ENCODE measurements at regions of chr14 and their contacts with region 1.

Region 1: DNA sequence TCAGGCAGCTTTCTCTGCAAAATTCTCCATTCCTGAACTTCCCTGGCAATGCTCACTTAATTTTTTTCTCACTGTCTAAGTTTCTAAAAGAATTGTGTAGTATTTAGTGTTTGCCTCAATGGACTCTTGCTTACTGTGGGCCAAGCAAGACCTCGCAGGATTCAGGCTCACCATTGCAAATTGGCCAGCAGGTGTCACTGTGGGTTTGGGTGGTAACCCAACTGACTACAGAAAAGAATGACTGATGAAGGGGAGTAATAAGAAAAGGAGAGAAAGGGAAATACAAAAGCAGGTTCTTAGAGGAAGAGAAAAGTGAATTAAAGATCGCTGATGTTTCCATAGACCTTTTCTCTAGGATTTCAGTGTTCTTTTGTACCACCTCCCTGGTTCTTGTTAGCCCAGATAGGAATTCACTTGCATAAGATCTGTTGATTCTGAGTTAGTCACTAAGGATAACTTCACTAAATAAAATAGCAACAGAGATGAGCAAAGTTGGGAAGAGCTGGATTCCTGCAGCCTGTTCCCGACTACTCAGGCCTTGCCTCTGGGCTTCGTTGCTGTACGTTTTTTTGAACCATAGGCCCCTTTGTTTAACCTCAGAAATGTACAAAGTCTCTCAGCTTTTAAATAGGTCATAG is 386.5 kb upstream of the DDHD1 start:
- DNase-seq: peak; percentile 41
- ATAC-seq: peak; percentile 96
- H3K4me3 ChIP-seq: no peak overlapping the region
- H3K27ac ChIP-seq: no peak overlapping the region
- H3K4me1 ChIP-seq: peaks cover 1% of the 10 kb centered on the region; the same call in 1 of the 2 replicates
- H3K27me3 ChIP-seq: no peaks in the 10 kb centered on the region
- CTCF ChIP-seq: peak; percentile 79 to 83 (median 82)
- EP300 ChIP-seq: no peak
- POLR2A ChIP-seq: no peak
- RAD21 ChIP-seq: peak; percentile 99

Region 2: DNA sequence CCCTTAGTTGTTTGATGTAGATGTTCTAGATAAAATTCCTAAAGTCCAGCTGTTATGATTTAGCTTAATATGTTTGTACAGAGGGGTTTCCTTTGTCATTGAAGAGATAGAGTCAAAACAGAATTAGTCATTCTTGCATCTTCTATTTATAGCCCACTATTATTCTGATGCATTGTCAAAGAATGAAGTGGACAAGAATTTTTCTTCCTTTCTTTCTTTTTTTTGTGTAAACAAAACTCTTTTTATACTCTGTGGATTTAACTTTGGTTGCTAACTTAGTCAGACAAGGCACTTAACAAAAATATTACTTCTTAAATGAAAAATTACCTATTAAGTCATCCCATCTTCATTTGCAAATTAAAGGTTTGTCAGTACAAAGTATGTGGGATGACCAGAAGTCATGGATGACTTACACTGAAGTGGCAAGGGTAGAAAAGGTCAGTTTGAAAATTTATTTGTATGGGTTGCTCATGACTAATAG is 170.9 kb before region 1 on chr14:
- CTCF ChIA-PET with region 1: no interaction called
- POLR2A ChIA-PET with region 1: no interaction called
- RAD21 ChIA-PET with region 1: no interaction called
- SMC1A ChIA-PET with region 1: no interaction called
- in situ Hi-C with region 1: no loop called
- intact Hi-C with region 1: no loop called
- DNase-seq: no peak
- ATAC-seq: no peak
- H3K4me3 ChIP-seq: no peak overlapping the region
- H3K27ac ChIP-seq: no peak overlapping the region
- H3K4me1 ChIP-seq: no peaks in the 10 kb centered on the region
- H3K27me3 ChIP-seq: no peaks in the 10 kb centered on the region
- CTCF ChIP-seq: no peak
- EP300 ChIP-seq: no peak
- POLR2A ChIP-seq: no peak
- RAD21 ChIP-seq: no peak

Region 3: DNA sequence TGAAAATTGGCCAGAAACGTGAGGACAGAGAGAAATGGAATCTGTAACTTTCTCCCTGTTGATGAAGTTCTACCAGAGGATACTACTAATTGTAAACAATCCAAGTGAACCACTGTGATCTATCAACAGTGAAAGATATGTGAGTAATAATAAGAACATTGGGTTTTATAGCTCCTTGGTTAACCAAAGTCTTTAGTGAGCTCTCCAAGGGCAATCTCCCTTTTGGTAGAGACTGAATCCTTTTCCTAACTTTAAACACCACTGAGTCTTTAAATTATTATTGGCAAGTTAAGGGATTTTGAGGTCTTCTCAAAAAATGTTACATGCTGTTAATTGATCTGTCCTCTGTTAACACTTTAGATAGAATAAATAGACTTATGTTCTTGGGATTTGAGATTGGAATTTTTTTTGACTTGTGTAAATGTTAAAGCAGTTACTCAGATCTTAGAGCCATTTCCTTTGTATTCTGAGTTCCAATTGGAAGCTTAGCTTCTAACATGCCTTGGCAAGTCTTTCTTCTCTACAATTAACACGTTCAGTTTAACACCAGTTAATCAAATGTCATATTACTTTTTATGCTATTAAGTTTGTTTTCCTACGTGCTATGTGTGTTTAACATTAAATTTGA is 48.2 kb before region 1 on chr14:
- CTCF ChIA-PET with region 1: no interaction called
- POLR2A ChIA-PET with region 1: no interaction called
- RAD21 ChIA-PET with region 1: no interaction called
- SMC1A ChIA-PET with region 1: no interaction called
- in situ Hi-C with region 1: no loop called
- intact Hi-C with region 1: loop called (anchors 5 kb)
- DNase-seq: no peak
- ATAC-seq: no peak
- H3K4me3 ChIP-seq: no peak overlapping the region
- H3K27ac ChIP-seq: no peak overlapping the region
- H3K4me1 ChIP-seq: no peaks in the 10 kb centered on the region
- H3K27me3 ChIP-seq: no peaks in the 10 kb centered on the region
- CTCF ChIP-seq: no peak
- EP300 ChIP-seq: no peak
- POLR2A ChIP-seq: no peak
- RAD21 ChIP-seq: no peak

Region 4: GRCh38 chr14:53701108-53701875 is 161.7 kb after region 1 on chr14:
- CTCF ChIA-PET with region 1: no interaction called
- POLR2A ChIA-PET with region 1: no interaction called
- RAD21 ChIA-PET with region 1: interaction called, 5 read pairs
- SMC1A ChIA-PET with region 1: no interaction called
- in situ Hi-C with region 1: no loop called
- intact Hi-C with region 1: loop called (anchors 1 kb)
- DNase-seq: peak; percentile 40
- ATAC-seq: peak; percentile 85
- H3K4me3 ChIP-seq: no peak overlapping the region
- H3K27ac ChIP-seq: peak overlapping the region; percentile 37
- H3K4me1 ChIP-seq: peaks cover 13% of the 10 kb centered on the region
- H3K27me3 ChIP-seq: no peaks in the 10 kb centered on the region
- CTCF ChIP-seq: no peak
- EP300 ChIP-seq: peak; percentile 77 to 84; a peak in 2 of 4 replicates
- POLR2A ChIP-seq: no peak
- RAD21 ChIP-seq: 0 out of 2 replicates have a peak, but pooled peaks have one; percentile 4

Region 5: DNA sequence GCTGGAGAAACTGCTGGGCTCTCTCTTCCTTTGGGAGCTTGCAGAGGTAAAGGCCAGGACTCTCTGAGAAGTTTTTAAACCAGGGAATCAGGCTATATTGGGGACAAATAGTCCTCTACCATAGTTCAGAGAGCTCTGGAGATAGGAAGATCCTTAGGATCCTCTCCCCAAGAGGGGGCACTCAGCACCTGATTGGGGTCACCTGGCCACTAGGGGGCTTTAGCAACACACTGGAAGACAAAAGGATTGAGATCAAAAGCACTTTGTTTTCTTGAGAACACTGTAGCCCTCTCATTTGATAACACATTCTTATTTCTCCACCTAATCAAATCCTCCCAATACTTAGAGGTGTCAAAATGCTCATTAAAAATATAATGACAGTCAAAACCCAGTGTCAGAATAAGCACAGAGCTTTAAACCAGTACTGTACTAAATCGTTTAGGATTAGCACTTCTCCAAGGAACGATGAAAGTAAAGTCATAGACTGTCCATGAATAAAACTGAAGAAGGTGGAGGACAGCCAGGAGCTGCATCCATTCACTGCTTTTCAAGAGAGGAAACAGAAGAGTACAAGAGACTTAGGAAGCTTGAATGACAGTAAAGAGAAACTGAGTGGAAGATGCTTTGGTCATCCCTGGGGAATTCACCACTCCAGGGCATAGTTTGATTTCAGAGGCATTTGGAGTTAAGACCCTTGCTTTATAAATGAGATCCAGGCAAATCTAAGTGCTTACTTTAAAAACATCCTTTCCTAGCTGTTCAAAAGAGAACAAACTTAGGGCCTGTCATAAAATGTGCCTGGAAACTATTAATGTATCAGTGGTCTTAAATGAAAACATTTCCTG is 390.5 kb after region 1 on chr14:
- CTCF ChIA-PET with region 1: no interaction called
- POLR2A ChIA-PET with region 1: no interaction called
- RAD21 ChIA-PET with region 1: no interaction called
- SMC1A ChIA-PET with region 1: no interaction called
- in situ Hi-C with region 1: no loop called
- intact Hi-C with region 1: loop called (anchors 10 kb)
- DNase-seq: no peak
- ATAC-seq: peak; percentile 54; the same call in 2 of the 3 replicates
- H3K4me3 ChIP-seq: no peak overlapping the region
- H3K27ac ChIP-seq: no peak overlapping the region
- H3K4me1 ChIP-seq: no peaks in the 10 kb centered on the region
- H3K27me3 ChIP-seq: no peaks in the 10 kb centered on the region; a peak in 1 of 4 replicates
- CTCF ChIP-seq: peak; percentile 60 to 71 (median 68)
- EP300 ChIP-seq: no peak
- POLR2A ChIP-seq: no peak
- RAD21 ChIP-seq: peak; percentile 59

Region 6: GRCh38 chr14:54175298-54175942 is 635.8 kb after region 1 on chr14:
- CTCF ChIA-PET with region 1: interaction called, 68 read pairs
- POLR2A ChIA-PET with region 1: no interaction called
- RAD21 ChIA-PET with region 1: interaction called, 10 read pairs
- SMC1A ChIA-PET with region 1: interaction called, 36 read pairs
- in situ Hi-C with region 1: loop called (anchors 5 kb)
- intact Hi-C with region 1: loop called (anchors 1 kb)
- DNase-seq: peak; percentile 16
- ATAC-seq: peak; percentile 62; the same call in 2 of the 3 replicates
- H3K4me3 ChIP-seq: no peak overlapping the region
- H3K27ac ChIP-seq: no peak overlapping the region
- H3K4me1 ChIP-seq: no peaks in the 10 kb centered on the region
- H3K27me3 ChIP-seq: peaks cover 0 to 4% of the 10 kb centered on the region in 2 experiments; a peak in 1 of 4 replicates
- CTCF ChIP-seq: peak; percentile 60 to 76 (median 69)
- EP300 ChIP-seq: no peak
- POLR2A ChIP-seq: no peak
- RAD21 ChIP-seq: peak; percentile 87

Region 7: GRCh38 chr14:54347997-54348611 is 808.5 kb after region 1 on chr14:
- CTCF ChIA-PET with region 1: interaction called, 29 read pairs
- POLR2A ChIA-PET with region 1: no interaction called
- RAD21 ChIA-PET with region 1: interaction called, 5 read pairs
- SMC1A ChIA-PET with region 1: interaction called, 7 read pairs
- in situ Hi-C with region 1: loop called (anchors 25 kb)
- intact Hi-C with region 1: loop called (anchors 5 kb)
- DNase-seq: no peak
- ATAC-seq: peak; percentile 78
- H3K4me3 ChIP-seq: no peak overlapping the region
- H3K27ac ChIP-seq: no peak overlapping the region
- H3K4me1 ChIP-seq: no peaks in the 10 kb centered on the region
- H3K27me3 ChIP-seq: no peaks in the 10 kb centered on the region
- CTCF ChIP-seq: peak; percentile 60 to 79 (median 70)
- EP300 ChIP-seq: no peak
- POLR2A ChIP-seq: no peak
- RAD21 ChIP-seq: peak; percentile 87

Measured in GM12878 (cell line).